Right cardiac atrium (tissue), 5 donors: ENCODE measurements at regions of chr2 and their contacts with region 1.

Region 1: DNA sequence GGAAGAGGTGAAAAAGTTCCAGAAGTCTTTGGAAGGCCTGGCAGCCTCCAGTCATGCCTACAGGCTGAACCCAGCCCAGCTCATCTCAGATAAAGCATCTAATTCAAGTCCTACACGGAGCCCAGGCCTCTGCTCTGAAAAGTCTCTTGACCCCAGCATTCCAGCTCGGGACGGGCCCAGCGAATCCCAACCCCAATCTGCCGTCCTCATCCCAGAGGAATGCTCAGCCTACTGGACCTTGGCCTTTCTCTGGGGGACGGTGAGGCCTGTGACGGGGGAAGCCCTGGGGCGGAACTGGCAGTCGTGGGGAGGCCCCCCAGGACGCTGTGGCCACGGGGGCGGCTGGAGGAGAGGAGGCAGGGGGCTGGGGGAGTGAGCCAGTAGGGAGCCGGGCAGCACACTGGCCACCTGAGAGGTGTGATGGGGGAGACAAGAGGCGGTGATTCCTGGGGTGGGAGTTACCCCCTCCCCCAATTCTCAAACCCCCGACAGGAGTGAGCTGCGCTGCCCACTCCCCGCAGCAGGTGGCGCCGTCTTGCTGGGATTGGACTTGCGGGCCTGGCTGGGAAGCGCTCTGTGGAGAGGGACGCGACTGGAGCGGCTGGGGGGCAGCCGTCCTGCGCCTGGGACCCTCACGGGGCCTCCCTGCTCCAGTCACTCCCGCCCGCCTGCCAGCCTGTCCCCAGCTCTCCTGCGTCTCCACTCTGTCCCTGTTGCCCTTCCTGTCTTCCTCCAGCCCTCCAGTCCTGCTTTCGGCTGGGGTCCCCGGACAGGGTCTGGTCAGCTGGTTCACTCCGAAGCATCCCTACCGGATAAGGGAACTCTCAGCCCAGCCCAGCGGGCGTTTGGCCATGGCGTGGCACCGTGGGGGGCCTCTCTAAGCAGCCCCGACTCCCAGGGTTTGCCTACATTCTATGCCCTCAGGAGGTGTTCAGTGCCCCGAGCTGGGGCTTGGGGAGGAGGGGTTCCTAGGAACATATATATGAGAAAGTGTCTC is 182.6 kb upstream of the HAAO start:
- DNase-seq: peak; percentile 81 to 94 (median 93)
- ATAC-seq: peak; percentile 87
- H3K4me3 ChIP-seq: peak overlapping the region; percentile 33
- H3K27ac ChIP-seq: no peak overlapping the region
- H3K4me1 ChIP-seq: no peaks in the 10 kb centered on the region
- H3K27me3 ChIP-seq: no peaks in the 10 kb centered on the region

Region 2: DNA sequence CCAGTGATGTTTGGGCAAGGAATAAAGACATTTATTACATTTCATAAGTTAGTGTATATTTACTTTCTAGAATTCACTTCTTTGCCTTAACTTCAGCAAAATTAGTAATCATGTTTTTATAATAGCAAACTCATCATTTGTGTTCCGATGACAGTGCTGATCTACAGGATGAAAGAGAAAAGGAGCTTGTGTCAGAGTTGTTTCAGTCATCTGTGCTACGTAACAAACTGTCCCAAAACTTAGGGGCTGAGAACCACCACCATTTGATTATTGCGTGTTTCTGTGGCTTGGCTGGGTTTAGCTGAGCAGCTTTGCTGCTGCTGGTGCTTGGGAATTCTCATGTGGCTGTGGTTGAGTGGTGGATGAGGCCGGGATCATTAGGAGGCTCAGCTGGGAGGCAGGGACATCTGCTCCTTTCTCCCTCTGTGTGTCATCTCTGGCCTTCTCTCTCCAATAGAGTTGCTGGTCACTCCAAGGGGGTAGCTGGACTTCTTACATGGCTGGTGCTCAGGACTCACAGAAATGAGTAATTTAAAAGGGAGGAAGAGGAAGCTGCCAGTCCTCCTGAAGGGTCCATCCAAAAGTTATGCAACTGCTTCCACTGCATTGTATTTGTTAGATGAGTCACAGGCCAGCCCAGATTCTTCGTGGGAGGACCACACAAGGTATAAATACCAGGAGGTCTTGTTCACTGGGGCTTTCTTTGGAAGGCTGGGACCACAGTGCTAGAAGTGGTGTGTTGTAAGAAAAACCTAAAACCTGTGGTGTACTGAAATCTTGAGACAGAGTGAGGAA is 139.2 kb before region 1 on chr2:
- intact Hi-C with region 1: no loop called
- DNase-seq: peak in 2 of 3 donors; percentile 30 to 61
- ATAC-seq: peak; percentile 55 to 92
- H3K4me3 ChIP-seq: no peak overlapping the region
- H3K27ac ChIP-seq: peak overlapping the region; percentile 80
- H3K4me1 ChIP-seq: peaks cover 9% of the 10 kb centered on the region
- H3K27me3 ChIP-seq: no peaks in the 10 kb centered on the region

Region 3: GRCh38 chr2:43131024-43131889 is 156.2 kb after region 1 on chr2:
- intact Hi-C with region 1: loop called in 1 of 4 experiments (anchors 10 kb)
- DNase-seq: peak; percentile 63 to 87 (median 78)
- ATAC-seq: peak; percentile 42 to 58
- H3K4me3 ChIP-seq: no peak overlapping the region
- H3K27ac ChIP-seq: peak overlapping the region; percentile 3
- H3K4me1 ChIP-seq: peaks cover 14% of the 10 kb centered on the region
- H3K27me3 ChIP-seq: no peaks in the 10 kb centered on the region